ENCODE measurements at regions of chr6 and their contacts with region 1.

Region 1: DNA sequence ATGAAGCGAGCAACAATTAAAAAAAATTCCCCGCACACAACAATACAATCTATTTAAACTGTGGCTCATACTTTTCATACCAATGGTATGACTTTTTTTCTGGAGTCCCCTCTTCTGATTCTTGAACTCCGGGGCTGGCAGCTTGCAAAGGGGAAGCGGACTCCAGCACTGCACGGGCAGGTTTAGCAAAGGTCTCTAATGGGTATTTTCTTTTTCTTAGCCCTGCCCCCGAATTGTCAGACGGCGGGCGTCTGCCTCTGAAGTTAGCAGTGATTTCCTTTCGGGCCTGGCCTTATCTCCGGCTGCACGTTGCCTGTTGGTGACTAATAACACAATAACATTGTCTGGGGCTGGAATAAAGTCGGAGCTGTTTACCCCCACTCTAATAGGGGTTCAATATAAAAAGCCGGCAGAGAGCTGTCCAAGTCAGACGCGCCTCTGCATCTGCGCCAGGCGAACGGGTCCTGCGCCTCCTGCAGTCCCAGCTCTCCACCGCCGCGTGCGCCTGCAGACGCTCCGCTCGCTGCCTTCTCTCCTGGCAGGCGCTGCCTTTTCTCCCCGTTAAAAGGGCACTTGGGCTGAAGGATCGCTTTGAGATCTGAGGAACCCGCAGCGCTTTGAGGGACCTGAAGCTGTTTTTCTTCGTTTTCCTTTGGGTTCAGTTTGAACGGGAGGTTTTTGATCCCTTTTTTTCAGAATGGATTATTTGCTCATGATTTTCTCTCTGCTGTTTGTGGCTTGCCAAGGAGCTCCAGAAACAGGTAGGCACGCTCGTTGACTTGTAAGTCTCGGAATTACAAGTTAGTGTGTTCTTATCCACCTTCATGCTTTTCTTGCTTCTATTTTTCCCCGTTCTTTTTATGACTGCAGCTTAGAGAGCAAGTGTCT is at the start of gene EDN1:
- DNase-seq: peak; percentile 100
- H3K4me3 ChIP-seq: peak within 1 kb of the TSS; percentile 91 to 98 (median 96)
- H3K27ac ChIP-seq: peak within 1 kb of the TSS; percentile 98
- H3K4me1 ChIP-seq: peaks cover 26% of the 10 kb centered on the region
- H3K27me3 ChIP-seq: no peaks in the 10 kb centered on the region
- CTCF ChIP-seq: no peak
- POLR2A ChIP-seq: peak; percentile 100
- total RNA-seq, gene EDN1: 493 and 514 TPM in 2 replicates

Region 2: DNA sequence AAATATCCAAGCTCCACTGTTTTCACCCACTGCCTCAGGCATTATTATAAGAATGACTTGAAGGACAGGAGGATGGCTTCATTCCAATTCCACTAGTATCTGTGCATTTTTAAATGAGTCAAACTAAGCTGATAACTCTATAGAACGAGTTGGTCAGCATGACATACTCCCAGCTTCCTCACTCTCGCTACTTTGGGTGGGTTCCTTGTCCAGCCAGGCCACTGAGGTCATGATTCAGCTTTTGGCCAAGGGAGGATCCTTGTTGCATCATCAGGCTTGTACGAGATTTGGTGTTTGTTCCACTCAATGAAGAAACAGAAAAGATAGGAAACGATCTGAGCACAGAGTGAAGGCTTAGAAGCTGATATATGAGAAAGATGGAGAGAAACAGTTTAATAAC is 1077.6 kb before region 1 on chr6:
- CTCF ChIA-PET with region 1: no interaction called
- POLR2A ChIA-PET with region 1: no interaction called
- dilution Hi-C with region 1: no loop called
- intact Hi-C with region 1: loop called (anchors 5 kb)
- DNase-seq: peak; percentile 71
- H3K4me3 ChIP-seq: no peak overlapping the region
- H3K27ac ChIP-seq: peak overlapping the region; percentile 77
- H3K4me1 ChIP-seq: peaks cover 95% of the 10 kb centered on the region
- H3K27me3 ChIP-seq: no peaks in the 10 kb centered on the region
- CTCF ChIP-seq: no peak
- POLR2A ChIP-seq: no peak

Region 3: DNA sequence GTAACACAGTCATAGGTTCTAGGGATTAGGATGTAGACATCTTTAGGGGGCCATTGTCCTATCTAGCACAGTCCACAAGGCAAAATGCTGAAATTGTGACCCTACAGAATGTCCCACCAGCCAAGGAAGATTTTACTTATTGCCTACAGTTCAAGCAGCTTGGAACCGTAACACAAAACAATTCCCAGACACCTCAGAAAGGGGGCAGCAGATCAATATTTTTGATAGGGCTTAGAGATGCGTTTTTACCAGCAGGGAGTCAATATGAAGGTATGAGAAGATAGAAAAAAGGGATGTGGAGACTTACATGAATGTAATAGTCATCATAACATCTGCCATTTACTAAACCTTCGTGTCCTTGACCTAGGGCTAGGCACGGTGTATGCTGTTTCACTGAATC is 671.6 kb before region 1 on chr6:
- CTCF ChIA-PET with region 1: interaction called, 7 read pairs
- POLR2A ChIA-PET with region 1: interaction called, 56 read pairs
- dilution Hi-C with region 1: loop called (anchors 25 kb)
- intact Hi-C with region 1: loop called (anchors 1 kb)
- DNase-seq: peak; percentile 65
- H3K4me3 ChIP-seq: no peak overlapping the region
- H3K27ac ChIP-seq: peak overlapping the region; percentile 30
- H3K4me1 ChIP-seq: peaks cover 34% of the 10 kb centered on the region
- H3K27me3 ChIP-seq: no peaks in the 10 kb centered on the region
- CTCF ChIP-seq: peak; percentile 14 to 26
- POLR2A ChIP-seq: no peak

Region 4: GRCh38 chr6:12011276-12012076 is 278.7 kb before region 1 on chr6:
- CTCF ChIA-PET with region 1: interaction called, 15 read pairs
- POLR2A ChIA-PET with region 1: interaction called, 29 read pairs
- dilution Hi-C with region 1: no loop called
- intact Hi-C with region 1: loop called (anchors 1 kb)
- DNase-seq: peak; percentile 96
- H3K4me3 ChIP-seq: peak overlapping the region in 1 of 3 experiments; percentile 71
- H3K27ac ChIP-seq: peak overlapping the region; percentile 98
- H3K4me1 ChIP-seq: peaks cover 38% of the 10 kb centered on the region
- H3K27me3 ChIP-seq: no peaks in the 10 kb centered on the region
- CTCF ChIP-seq: no peak
- POLR2A ChIP-seq: peak; percentile 7

Region 5: GRCh38 chr6:12233693-12234571 is 56.2 kb before region 1 on chr6:
- CTCF ChIA-PET with region 1: interaction called, 34 read pairs
- POLR2A ChIA-PET with region 1: no interaction called
- dilution Hi-C with region 1: no loop called
- intact Hi-C with region 1: loop called (anchors 1 kb)
- DNase-seq: peak; percentile 86
- H3K4me3 ChIP-seq: no peak overlapping the region
- H3K27ac ChIP-seq: no peak overlapping the region
- H3K4me1 ChIP-seq: no peaks in the 10 kb centered on the region
- H3K27me3 ChIP-seq: no peaks in the 10 kb centered on the region
- CTCF ChIP-seq: peak; percentile 59 to 73
- POLR2A ChIP-seq: no peak

Region 6: GRCh38 chr6:12483712-12484111 is 193.5 kb after region 1 on chr6:
- CTCF ChIA-PET with region 1: interaction called, 12 read pairs
- POLR2A ChIA-PET with region 1: interaction called, 4 read pairs
- dilution Hi-C with region 1: loop called (anchors 25 kb)
- intact Hi-C with region 1: no loop called
- DNase-seq: peak; percentile 90
- H3K4me3 ChIP-seq: peak overlapping the region in 1 of 3 experiments; percentile 9
- H3K27ac ChIP-seq: peak overlapping the region; percentile 74
- H3K4me1 ChIP-seq: peaks cover 54% of the 10 kb centered on the region
- H3K27me3 ChIP-seq: no peaks in the 10 kb centered on the region
- CTCF ChIP-seq: no peak
- POLR2A ChIP-seq: peak; percentile 56

Region 7: DNA sequence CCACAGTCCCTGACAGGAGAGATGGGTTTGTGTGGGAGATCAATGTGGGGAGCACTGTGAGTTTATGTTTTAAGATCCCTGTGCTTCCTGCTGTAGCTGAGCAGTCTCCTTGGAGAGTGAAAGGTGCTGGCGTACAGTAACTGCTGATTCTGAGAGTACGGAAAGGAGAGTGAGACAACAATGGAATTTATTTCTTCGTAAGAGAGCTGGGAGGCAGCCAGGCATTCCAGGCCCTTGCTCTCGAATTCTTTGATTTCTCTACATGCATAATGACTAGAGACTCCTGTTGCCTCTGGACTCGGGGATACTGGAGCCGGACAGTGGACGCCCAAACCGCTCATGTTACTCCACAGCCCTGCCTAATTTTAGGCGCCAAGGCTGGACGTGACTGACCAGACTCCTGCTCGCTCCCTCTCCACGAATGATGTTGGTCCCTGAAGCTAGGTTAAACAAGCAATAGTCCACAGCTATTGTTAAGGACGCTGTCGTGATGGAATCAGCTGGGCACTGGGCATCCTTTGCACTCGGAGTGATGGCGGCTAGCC is 295.4 kb after region 1 on chr6:
- CTCF ChIA-PET with region 1: interaction called, 7 read pairs
- POLR2A ChIA-PET with region 1: interaction called, 20 read pairs
- dilution Hi-C with region 1: loop called (anchors 10 kb)
- intact Hi-C with region 1: loop called (anchors 1 kb)
- DNase-seq: peak; percentile 96
- H3K4me3 ChIP-seq: peak overlapping the region in 1 of 3 experiments; percentile 25
- H3K27ac ChIP-seq: peak overlapping the region; percentile 100
- H3K4me1 ChIP-seq: peaks cover 51% of the 10 kb centered on the region
- H3K27me3 ChIP-seq: no peaks in the 10 kb centered on the region
- CTCF ChIP-seq: no peak
- POLR2A ChIP-seq: peak; percentile 49

Measured in endothelial cell of umbilical vein (primary cell).